Ascending aorta (tissue), 2 donors: ENCODE measurements at regions of chr10 and their contacts with region 1.

Region 1: DNA sequence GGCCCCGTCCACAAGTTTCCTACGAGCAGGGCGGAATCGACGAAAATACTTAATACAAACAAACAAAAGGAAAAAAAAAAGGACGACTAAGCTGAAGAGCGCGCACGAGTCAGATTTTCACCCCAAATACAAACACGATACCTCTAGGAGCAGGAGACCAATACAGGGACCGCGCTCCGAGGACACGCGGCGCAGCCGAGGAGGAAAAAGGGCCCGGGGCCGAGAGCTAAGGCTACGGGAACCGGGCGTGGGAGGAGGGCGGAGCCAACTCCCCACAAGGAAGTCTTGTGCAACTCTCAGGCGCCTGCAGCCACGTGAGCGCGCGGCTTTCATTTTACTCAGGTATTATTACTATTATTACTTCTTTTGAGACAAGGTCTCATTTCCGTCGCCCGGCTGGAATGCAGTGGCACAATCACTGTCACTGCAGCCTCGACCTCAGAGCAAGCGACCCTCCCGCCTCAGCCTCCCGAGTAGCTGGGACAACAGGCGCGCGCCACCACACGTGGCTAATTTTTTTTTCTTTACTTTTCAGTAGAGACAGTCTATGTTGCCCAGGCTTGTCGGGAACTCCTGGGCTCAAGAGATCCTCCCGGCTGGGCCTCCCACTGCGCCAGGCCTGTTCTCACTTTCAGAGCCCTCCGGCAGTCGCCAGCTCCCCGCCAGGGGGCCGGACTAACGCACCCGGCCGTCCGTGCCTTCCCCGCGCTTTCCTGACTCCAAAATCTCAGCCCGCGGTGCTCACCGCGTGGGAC is 1.2 kb downstream of the HNRNPF start:
- DNase-seq: peak; percentile 77 to 95
- H3K4me3 ChIP-seq: peak overlapping the region; percentile 81 to 85
- H3K27ac ChIP-seq: peak overlapping the region; percentile 100
- H3K4me1 ChIP-seq: peaks cover 6 to 29% of the 10 kb centered on the region in 2 donors
- H3K27me3 ChIP-seq: no peaks in the 10 kb centered on the region
- CTCF ChIP-seq: peak; percentile 16 to 33 (median 19)

Region 2: DNA sequence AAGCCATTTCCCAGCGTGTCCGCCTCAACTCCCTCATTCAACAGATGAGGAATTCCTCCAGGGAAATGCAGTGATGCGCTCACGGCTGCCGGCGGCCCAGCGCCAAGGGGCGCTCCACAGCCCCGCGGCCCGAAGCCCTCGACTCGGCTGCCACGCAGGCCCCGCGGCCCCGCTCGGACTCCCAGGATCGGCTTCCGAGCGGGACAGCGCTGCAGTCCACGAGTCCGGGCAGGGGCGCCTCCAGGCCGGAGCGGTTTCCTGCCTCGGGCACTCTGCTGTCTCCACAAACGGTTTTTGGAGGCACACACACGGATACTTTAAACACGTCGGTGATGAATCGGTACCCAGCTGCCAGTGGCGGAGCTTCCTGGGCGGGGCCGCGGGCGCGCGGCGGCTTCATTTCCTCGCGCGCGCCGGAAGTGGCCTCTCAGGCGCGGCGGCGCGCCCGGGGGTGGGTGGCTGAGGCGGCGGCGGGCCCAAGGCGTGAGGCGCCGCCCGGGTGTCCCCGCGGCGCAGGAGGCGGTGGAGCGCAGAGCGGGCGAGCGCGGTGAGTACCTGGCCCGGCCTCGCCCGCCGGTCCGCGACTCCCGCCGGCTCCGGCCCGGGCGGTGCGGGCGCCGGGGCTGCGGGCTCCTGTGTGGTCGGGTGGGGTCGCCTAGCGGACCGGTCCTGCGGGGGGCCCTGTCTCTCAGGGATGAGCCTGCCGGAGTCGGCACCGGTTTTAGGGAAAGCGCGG is 269.6 kb before region 1 on chr10 and contains the start of gene CSGALNACT2:
- intact Hi-C with region 1: loop called (anchors 2 kb)
- DNase-seq: peak; percentile 64 to 95
- H3K4me3 ChIP-seq: peak within 1 kb of the TSS; percentile 85 to 87
- H3K27ac ChIP-seq: peak within 1 kb of the TSS; percentile 92 to 98
- H3K4me1 ChIP-seq: peaks cover 0 to 15% of the 10 kb centered on the region in 2 donors
- H3K27me3 ChIP-seq: no peaks in the 10 kb centered on the region
- CTCF ChIP-seq: no peak
- total RNA-seq, gene CSGALNACT2: 19.7 TPM

Region 3: GRCh38 chr10:43396928-43397624 is 10.7 kb before region 1 on chr10:
- intact Hi-C with region 1: loop called (anchors 1 kb)
- DNase-seq: peak; percentile 76 to 94
- H3K4me3 ChIP-seq: peak overlapping the region; percentile 75 to 81
- H3K27ac ChIP-seq: peak overlapping the region; percentile 97 to 99
- H3K4me1 ChIP-seq: peaks cover 7 to 40% of the 10 kb centered on the region in 2 donors
- H3K27me3 ChIP-seq: no peaks in the 10 kb centered on the region
- CTCF ChIP-seq: no peak

Region 4: DNA sequence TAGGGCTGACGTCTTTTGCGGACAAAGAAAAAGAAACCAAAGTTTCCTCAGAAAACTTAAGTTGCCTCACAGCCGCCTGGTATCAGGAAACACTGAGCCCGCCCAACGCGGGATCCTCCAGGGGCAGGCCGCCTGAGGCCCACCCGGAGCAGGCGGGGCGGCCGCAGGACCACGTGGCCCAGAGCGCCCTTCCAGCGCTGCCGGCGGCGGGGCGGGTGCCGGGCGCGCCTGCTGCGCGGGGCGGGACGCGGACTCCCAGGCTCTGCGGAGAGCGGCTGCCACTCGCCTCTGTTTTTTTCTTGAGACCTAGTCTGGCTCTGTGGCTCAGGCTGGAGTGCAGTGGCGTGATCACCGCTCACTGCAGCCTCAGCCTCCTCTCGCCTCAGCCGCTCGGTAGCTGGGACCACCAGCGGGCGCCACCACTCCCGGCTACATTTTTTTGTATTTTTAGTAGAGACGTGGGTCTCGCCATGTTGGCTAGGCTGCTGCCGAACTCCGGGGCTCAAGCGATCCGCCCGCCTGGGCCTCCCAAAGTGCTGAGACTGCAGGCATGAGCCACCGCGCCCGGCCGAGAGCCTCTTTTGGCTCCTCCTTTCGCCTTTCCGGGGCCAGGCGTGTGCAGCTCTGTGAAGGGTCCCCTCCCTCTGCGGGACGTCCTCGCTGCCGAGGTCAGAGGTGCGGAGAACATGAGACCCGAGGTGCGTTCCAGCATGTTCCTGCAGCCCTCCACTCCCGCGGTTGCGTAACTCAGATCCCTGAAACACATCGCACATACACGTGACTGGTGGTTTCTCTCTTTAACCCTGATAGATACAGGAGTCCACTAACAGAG is 12.8 kb after region 1 on chr10:
- intact Hi-C with region 1: loop called (anchors 1 kb)
- DNase-seq: peak; percentile 63 to 94
- H3K4me3 ChIP-seq: peak overlapping the region; percentile 72 to 73
- H3K27ac ChIP-seq: peak overlapping the region; percentile 94 to 95
- H3K4me1 ChIP-seq: peaks cover 0 to 12% of the 10 kb centered on the region in 2 donors
- H3K27me3 ChIP-seq: no peaks in the 10 kb centered on the region
- CTCF ChIP-seq: peak in 1 of 3 experiments; percentile 14

Region 5: DNA sequence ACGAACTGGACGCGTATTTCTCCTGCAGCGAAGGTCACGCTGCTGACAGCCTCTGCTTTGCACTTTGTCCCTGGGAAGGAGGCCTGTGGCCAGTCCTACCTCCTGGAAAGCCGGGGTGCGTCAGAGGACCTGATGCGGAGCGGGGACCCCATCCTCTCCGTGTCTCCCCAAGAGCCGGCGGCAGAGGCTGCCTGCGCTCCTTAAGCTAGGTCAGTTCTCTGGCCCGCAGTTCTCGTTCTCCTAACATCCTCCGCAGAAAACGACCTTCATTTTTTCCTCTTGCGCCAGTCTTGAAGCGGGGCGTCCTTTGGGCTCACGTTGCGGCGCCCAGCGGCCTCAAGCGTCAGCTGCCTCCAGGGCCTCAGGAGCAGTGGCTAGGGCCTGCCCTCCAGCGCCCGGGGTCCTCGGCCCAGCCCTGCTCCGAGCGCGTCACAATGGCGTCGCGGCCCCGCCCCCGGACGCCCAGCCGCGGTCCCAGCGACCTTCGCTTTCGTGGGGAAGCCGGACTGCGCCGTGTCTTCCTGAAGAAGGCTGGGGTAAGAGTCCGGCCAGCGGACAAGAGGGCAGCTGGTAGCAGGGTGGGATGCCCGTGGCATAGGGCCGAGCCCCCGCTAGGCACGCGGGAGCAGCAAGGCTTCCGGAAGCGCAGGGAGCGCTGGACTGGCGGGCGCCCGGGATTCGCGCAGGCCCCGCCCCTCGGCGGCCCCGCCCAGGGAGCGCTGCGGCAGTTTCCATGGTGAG is 28.8 kb after region 1 on chr10 and contains the start of gene ZNF487:
- intact Hi-C with region 1: loop called (anchors 1 kb)
- DNase-seq: peak; percentile 76 to 95
- H3K4me3 ChIP-seq: peak within 1 kb of the TSS; percentile 77
- H3K27ac ChIP-seq: peak within 1 kb of the TSS; percentile 92 to 97
- H3K4me1 ChIP-seq: peaks cover 0 to 12% of the 10 kb centered on the region in 2 donors
- H3K27me3 ChIP-seq: no peaks in the 10 kb centered on the region
- CTCF ChIP-seq: peak in 1 of 3 experiments; percentile 12
- total RNA-seq, gene ZNF487: 3.9 TPM

Region 6: GRCh38 chr10:44569193-44570091 is 1161.7 kb after region 1 on chr10:
- intact Hi-C with region 1: loop called (anchors 5 kb)
- DNase-seq: peak in 1 of 2 donors; percentile 87
- H3K4me3 ChIP-seq: no peak overlapping the region
- H3K27ac ChIP-seq: peak overlapping the region; percentile 19 to 79
- H3K4me1 ChIP-seq: peaks cover 9 to 14% of the 10 kb centered on the region in 2 donors
- H3K27me3 ChIP-seq: no peaks in the 10 kb centered on the region
- CTCF ChIP-seq: no peak